ENCODE measurements at regions of chr19 and their contacts with region 1.

Region 1: DNA sequence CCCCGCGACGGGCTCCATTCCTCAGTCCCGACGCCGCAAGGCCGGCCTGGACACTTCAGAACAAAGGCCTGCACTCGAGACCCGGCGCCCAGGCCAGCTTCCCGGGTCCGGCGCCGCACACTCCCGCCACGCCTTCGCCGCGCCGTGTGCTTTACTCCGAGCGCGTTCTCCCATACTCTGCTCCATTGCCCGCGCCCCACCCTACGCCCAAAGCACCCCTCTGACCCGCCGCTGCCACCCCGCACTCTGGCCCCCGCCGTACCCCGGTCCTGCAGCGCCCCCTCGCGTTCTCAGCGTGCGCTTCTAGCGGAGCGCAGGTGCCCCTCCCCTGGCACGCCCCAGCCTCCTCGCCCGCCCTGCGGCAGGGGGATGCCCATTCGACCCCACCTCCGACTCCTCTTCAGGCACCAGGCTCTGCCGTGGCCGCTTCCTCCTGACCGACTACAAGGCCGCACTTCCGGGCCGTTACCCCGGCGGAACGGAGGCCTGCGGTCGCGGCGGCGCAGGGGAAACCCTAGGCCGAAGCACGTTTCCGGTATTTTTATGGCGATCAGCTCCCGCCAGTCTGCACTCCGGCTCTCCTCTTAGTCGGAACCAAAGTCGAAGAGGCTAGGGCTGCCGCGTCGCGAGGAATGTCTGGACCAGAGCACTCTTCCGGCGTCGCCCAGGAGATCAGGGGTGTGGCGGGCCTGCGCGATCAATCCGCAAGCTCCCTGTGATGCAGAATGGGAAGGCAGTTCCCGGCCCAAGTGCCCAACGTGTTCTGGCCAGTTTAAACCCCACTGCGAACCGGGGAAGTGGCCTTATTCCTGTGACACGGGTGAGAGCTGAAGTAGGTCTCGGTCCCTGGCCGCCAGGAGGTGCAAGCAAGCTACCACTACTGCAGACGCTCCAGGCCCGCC is at the start of gene ZBTB45:
- DNase-seq: peak; percentile 84 to 90 (median 88)
- H3K4me3 ChIP-seq: peak within 1 kb of the TSS; percentile 81
- H3K4me3 Mint-ChIP-seq: peak within 1 kb of the TSS; percentile 90 to 97 (median 95)
- H3K27ac ChIP-seq: peak within 1 kb of the TSS; percentile 86
- H3K27ac Mint-ChIP-seq: peak within 1 kb of the TSS; percentile 90 to 99 (median 98)
- H3K4me1 ChIP-seq: peaks cover 23% of the 10 kb centered on the region
- H3K4me1 Mint-ChIP-seq: peaks cover 34 to 46% (median 35%) of the 10 kb centered on the region in 3 donors
- H3K27me3 ChIP-seq: no peaks in the 10 kb centered on the region
- H3K27me3 Mint-ChIP-seq: peaks cover 0 to 3% of the 10 kb centered on the region in 2 donors
- total RNA-seq, gene ZBTB45: 15.0 to 16.1 TPM

Region 2: DNA sequence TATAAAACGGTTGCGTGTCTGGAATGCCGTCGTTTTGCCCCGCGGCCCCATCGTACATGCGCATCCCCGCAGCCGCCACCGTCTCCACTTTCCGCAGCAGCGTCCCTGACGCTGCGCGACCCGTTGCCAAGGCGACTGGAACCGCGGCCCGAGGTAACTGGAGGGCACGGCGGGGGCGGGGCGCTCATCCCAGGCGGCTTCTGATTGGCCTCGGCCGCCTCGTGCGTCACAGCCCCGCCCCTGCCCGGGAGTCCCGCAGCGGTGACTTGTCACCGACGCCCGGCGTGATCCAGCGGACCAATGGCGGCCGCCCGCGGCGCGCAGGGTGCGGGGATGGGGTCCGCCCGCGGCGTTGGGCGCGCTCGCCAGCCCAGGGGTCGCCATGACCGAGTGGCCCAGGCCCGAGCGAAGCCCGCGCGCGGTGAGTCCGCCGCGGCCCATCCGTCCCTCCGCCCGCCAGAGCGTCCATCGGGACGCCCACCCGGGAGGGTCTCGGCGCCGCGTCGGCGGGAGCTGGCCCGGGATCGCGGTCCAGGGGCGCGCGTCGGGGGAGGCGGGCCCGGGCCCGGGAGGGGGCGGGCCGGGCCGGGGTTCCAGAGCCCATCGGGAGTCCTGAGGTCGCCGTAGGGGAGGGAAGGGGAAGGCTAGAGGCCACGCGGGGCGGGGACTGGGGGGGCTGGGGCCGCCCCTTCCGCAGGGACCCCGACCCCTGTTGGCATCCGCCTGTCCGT is 485.7 kb before region 1 on chr19 and contains the start of gene ZSCAN1:
- CTCF ChIA-PET with region 1: no interaction called
- POLR2A ChIA-PET with region 1: no interaction called
- DNase-seq: peak in 2 of 5 donors; percentile 21 to 65
- H3K4me3 ChIP-seq: no peak within 1 kb of the TSS
- H3K4me3 Mint-ChIP-seq: peak within 1 kb of the TSS in 2 of 7 donors; percentile 1 to 36
- H3K27ac ChIP-seq: no peak within 1 kb of the TSS
- H3K27ac Mint-ChIP-seq: no peak within 1 kb of the TSS
- H3K4me1 ChIP-seq: no peaks in the 10 kb centered on the region
- H3K4me1 Mint-ChIP-seq: peaks cover 0 to 4% (median 0%) of the 10 kb centered on the region in 3 donors
- H3K27me3 ChIP-seq: no peaks in the 10 kb centered on the region
- H3K27me3 Mint-ChIP-seq: peaks cover 25 to 41% of the 10 kb centered on the region in 2 donors
- total RNA-seq, gene ZSCAN1: not detected

Region 3: DNA sequence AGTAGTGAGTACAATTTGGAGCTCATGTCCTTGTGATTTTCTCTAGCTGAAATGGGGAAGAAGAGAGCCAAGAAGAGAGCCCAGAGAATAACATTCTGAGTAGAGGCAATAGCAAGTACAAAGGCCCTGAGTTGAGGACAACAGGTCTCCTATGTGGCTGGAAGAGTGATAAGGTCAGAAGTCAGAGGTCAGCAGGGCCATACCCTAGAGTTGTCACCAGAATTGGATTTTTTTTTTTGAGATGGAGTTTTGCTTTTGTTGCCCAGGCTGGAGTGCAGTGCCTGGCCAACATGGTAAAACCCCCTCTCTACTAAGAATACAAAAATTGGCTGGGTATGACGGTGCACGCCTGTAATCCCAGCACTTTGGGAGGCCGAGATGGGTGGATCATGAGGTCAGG is 16.3 kb after region 1 on chr19:
- CTCF ChIA-PET with region 1: interaction called, 14 read pairs
- POLR2A ChIA-PET with region 1: no interaction called
- DNase-seq: no peak
- H3K4me3 ChIP-seq: no peak overlapping the region
- H3K4me3 Mint-ChIP-seq: no peak overlapping the region
- H3K27ac ChIP-seq: no peak overlapping the region
- H3K27ac Mint-ChIP-seq: no peak overlapping the region
- H3K4me1 ChIP-seq: peaks cover 5% of the 10 kb centered on the region
- H3K4me1 Mint-ChIP-seq: peaks cover 5 to 10% (median 9%) of the 10 kb centered on the region in 3 donors
- H3K27me3 ChIP-seq: no peaks in the 10 kb centered on the region
- H3K27me3 Mint-ChIP-seq: peaks cover 14 to 29% of the 10 kb centered on the region in 2 donors

Region 4: GRCh38 chr19:58543826-58544590 is 24.4 kb after region 1 on chr19 and contains the start of gene TRIM28:
- CTCF ChIA-PET with region 1: interaction called, 29 read pairs
- POLR2A ChIA-PET with region 1: interaction called, 28 read pairs
- DNase-seq: peak; percentile 100
- H3K4me3 ChIP-seq: peak within 1 kb of the TSS; percentile 71
- H3K4me3 Mint-ChIP-seq: peak within 1 kb of the TSS; percentile 89 to 96 (median 94)
- H3K27ac ChIP-seq: peak within 1 kb of the TSS; percentile 84
- H3K27ac Mint-ChIP-seq: peak within 1 kb of the TSS; percentile 98 to 100 (median 99)
- H3K4me1 ChIP-seq: peaks cover 24% of the 10 kb centered on the region
- H3K4me1 Mint-ChIP-seq: peaks cover 31 to 42% (median 36%) of the 10 kb centered on the region in 3 donors
- H3K27me3 ChIP-seq: no peaks in the 10 kb centered on the region
- H3K27me3 Mint-ChIP-seq: peaks cover 14 to 17% of the 10 kb centered on the region in 2 donors
- total RNA-seq, gene TRIM28: 705 to 715 TPM

Region 5: DNA sequence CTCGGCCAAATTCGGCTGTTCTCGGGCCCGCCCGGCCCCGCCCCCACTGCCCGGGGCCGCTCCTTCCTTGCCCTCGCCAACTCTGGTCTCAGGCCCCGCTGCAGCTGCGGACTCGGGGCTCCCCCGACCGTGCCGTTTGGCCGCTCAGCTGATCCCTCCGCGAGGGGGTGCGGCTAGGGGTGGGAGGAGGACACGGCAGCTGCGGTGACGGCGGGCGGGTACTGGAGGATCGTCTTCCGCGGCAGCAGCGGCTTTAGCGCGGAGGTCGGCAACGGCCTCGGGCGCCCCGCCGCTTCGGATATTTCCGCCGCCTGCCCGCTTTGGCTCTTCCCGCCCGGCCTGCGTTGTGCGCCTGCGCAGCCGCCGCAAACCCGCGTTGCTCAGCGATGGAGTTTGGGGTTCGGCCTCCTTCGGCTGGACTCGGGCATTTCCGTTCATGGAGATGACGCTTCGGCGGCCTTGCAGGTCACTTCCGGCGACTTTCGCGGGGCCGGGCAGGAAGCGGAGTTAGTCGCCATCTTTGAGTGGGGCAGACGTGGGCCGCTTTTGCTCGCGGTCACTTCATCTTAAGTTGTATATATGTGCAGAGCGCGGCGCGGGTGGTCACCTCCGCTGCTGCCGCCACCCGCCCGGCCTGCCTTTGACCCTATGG is 39.1 kb after region 1 on chr19:
- CTCF ChIA-PET with region 1: interaction called, 45 read pairs
- POLR2A ChIA-PET with region 1: interaction called, 16 read pairs
- DNase-seq: peak; percentile 100
- H3K4me3 ChIP-seq: peak overlapping the region; percentile 100
- H3K4me3 Mint-ChIP-seq: peak overlapping the region; percentile 93 to 100 (median 97)
- H3K27ac ChIP-seq: peak overlapping the region; percentile 99
- H3K27ac Mint-ChIP-seq: peak overlapping the region; percentile 96 to 100 (median 98)
- H3K4me1 ChIP-seq: peaks cover 62% of the 10 kb centered on the region
- H3K4me1 Mint-ChIP-seq: peaks cover 65 to 87% (median 68%) of the 10 kb centered on the region in 3 donors
- H3K27me3 ChIP-seq: no peaks in the 10 kb centered on the region
- H3K27me3 Mint-ChIP-seq: no peaks in the 10 kb centered on the region

Region 6: DNA sequence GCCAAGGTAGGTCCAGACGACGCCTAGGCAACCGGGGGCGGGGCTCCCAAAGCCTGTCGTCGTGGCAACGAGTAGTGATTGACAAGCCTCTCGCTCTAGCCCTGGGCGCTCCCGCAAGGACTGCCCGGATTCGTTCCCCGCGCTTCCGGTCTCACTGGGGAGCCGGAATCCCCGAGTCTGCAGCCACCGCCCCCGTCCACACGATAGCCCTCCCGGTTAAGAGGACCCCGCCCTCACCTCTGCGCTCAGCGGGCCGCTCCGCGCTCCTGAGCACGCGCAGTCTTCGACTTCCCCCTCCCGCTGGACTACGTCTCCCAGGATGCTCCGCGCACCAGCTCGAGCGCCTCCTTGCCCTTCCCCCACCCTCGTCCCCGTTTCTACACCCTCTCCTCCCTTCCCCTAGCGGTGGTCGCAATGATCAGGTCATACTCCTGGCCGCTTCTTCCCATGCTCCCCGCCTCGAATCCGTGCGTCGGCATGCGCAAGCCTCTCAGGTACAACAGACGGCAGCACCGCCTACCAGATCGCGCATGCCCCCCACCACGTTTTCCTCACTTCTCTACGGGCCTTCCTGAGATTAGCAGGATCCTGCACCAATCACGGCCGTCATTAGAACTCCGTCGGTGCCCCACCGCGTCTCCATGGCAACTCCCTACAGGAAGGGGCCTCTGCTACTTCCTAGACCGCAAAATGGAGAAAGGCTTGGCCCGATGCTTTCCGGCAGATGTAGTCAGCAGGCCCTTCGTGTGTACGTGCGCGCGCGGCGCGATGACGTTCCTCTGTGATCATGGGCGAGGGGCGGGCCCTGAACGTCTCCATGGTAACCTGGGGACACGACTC is 53.4 kb after region 1 on chr19 and contains the start of gene MZF1:
- CTCF ChIA-PET with region 1: interaction called, 28 read pairs
- POLR2A ChIA-PET with region 1: interaction called, 17 read pairs
- DNase-seq: peak; percentile 99 to 100 (median 100)
- H3K4me3 ChIP-seq: peak within 1 kb of the TSS; percentile 98
- H3K4me3 Mint-ChIP-seq: peak within 1 kb of the TSS; percentile 89 to 99 (median 95)
- H3K27ac ChIP-seq: peak within 1 kb of the TSS; percentile 100
- H3K27ac Mint-ChIP-seq: peak within 1 kb of the TSS; percentile 95 to 100 (median 100)
- H3K4me1 ChIP-seq: peaks cover 29% of the 10 kb centered on the region
- H3K4me1 Mint-ChIP-seq: peaks cover 24 to 49% (median 26%) of the 10 kb centered on the region in 3 donors
- H3K27me3 ChIP-seq: no peaks in the 10 kb centered on the region
- H3K27me3 Mint-ChIP-seq: peaks cover 0 to 9% of the 10 kb centered on the region in 2 donors
- total RNA-seq, gene MZF1: 14.0 to 14.8 TPM

Region 7: DNA sequence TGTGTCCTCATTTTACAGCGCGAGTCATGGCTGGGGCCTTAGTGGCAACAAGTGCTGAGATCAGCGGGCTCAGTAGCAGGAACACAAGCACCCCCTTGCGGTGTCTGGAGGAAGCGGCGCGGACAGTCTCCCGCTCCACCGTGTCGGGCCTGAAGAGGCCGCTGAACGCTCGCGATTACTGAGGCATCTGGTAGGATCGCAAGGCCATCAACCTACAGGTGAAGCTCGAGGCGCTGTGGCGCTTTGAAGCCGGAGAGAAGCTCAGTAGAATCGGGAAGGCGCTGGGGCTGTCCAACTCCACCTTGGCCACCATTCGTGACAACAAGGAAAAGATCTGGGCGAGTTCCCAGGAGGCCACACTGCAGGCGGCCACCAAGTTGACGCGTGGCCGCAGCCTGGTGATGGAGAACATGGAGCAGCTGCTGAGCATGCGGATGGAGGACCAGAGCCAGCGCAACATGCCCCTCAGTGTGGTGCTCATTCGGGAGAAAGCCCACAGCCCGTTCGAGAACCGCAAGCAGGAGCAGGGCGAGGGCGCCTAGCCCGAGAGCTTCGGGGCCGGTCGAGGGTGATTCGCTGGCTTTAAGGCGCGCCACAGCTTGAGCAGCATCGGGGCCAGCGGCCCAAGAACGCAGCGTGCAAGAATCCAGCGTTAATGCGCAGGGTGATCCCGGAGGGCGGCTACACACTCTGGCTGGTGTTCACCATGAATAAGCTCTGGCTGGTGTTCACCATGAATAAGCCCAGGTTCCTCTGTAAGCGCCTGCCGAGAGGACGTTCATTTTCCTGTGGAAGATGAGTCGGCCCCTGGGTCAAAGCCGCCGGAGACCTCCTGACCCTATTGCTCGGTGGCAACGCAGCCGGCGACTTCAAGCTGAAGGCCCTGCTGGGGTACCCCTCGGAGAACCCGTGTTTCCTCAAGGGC is 61.9 kb after region 1 on chr19:
- CTCF ChIA-PET with region 1: interaction called, 77 read pairs
- POLR2A ChIA-PET with region 1: interaction called, 7 read pairs
- DNase-seq: peak; percentile 82 to 91 (median 84)
- H3K4me3 ChIP-seq: no peak overlapping the region
- H3K4me3 Mint-ChIP-seq: peak overlapping the region in 1 of 7 donors; percentile 57
- H3K27ac ChIP-seq: peak overlapping the region; percentile 65
- H3K27ac Mint-ChIP-seq: peak overlapping the region; percentile 65 to 88 (median 84)
- H3K4me1 ChIP-seq: peaks cover 9% of the 10 kb centered on the region
- H3K4me1 Mint-ChIP-seq: peaks cover 15 to 28% (median 20%) of the 10 kb centered on the region in 3 donors
- H3K27me3 ChIP-seq: no peaks in the 10 kb centered on the region
- H3K27me3 Mint-ChIP-seq: peaks cover 0 to 2% of the 10 kb centered on the region in 2 donors